ENCODE measurements at regions of chr14 and their contacts with region 1.

Region 1: DNA sequence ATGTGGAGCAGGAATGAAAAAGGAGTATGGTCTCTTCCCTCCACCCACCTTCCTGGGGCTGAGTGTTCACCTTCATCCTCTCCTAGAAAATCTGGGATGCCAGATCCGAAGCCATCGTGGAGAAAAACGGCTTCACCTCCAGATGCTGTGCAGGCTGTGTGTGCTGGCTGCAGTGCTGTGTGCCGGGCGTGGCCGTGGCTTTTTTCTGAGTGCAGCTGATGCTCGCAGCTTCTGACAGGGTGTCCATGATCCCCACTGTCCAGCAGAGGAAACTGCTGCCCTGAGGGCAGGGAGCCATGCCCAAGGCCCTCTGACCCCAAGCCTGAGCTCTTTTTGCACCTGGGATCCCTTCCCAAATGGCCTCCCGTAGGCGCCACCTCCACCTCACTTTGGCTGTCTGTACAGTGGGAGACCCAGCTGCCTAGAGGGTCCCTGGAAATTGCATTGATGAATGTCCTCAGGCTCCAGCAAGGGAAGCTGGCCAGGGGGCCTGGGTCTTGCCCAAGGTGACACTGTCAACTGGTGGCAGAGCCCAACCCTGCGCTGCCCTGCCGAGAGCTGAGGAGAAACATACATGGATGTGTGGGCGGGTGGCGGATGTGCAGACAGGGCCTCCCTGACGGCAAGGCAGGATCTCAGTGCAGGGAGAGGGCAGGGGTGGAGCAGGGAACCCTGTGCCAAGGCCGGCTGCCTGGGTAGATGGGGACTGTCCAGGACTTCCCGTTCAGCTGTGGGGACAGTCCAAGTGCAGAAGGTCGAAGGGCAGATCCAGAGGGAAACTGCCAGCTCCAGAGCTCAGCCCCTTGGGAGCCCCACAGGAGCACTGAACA is 53.3 kb downstream of the BEGAIN start:
- DNase-seq: peak; percentile 65
- ATAC-seq: no peak

Region 2: DNA sequence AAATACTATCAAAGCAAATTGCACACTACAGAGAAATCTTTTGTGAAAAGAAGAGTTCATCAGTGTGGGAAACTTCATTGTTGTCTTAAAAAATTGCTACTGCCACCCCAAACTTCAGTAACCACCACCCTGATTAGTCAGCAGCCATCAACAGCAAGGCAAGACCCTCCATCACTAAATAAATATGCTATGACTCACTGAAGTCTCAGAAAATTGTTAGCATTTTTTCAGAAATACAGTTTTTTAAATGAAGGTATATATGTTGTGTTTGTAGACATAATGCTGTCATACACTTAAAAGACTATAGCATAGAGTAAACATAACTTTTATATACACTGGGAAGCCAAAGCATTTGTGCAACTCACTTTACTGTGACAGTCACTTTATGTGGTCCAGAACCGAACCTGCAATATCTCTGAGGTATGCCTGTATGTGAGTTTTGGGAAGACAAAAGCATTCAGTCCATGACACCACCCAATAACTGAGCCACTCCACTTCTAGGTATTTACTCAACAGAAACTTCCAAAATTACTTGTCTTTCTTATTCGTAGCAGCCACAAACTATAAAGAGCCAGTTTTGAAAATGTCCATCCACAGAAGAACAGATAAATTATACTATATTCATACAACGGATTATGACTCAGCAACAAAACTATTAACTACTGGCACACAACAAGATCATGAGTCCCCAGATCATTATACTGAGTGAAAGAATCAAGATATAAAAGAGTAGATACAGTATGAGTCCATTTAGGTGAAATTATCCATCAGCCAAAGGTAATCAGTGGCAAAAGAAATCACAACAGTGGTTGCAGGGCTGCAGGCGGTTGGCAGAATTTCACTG is 1911.4 kb before region 1 on chr14:
- intact Hi-C with region 1: loop called (anchors 10 kb)
- DNase-seq: no peak
- ATAC-seq: no peak

Region 3: DNA sequence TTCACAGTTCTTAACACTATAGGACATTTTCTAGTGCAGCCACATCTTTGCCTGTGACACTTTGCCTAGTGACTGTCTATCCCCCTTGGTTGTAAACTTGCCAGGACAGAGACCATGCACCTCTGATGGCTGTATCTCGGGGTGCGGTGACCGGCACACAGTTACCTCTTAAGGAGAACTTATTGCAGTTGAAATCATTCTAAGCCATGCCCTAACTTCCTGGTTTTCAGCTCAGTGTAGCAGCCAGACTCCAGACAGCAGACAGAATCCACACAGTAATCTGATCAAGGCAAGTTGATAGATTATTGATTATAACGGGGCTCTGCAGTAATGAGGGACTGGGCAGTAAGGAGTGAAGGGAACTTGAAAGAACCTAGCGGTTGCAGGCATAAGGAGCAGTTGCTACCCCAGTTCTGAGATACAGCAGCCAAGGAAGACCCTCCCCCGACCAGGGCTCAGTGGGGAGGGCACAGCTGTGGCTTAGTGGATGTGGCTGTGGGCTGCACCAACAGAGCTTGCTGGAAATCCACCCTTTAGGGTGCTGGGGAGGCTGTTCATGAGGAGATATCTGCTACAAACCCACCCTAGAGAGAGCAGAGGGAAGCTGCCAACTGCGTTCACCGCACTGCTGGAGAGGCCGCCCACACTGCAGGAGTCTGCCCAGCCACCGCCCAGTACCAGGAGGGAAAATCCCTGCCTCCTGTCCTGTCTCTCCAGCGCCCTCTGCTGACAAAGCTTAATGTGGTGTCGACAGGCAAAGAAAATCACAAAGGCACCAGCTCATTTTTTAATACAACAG is 111.5 kb after region 1 on chr14:
- intact Hi-C with region 1: loop called (anchors 10 kb)
- DNase-seq: peak; percentile 95
- ATAC-seq: peak; percentile 93

Measured in sciatic nerve (tissue), 2 donors.